ENCODE measurements at regions of chr1 and their contacts with region 1.

Region 1: GRCh38 chr1:162854245-162854882 is 6.6 kb downstream of the CCDC190 start:
- DNase-seq: peak; percentile 13 to 64 (median 25)
- H3K4me3 ChIP-seq: no peak overlapping the region
- H3K4me3 Mint-ChIP-seq: no peak overlapping the region
- H3K27ac ChIP-seq: no peak overlapping the region
- H3K27ac Mint-ChIP-seq: no peak overlapping the region
- H3K4me1 ChIP-seq: no peaks in the 10 kb centered on the region
- H3K4me1 Mint-ChIP-seq: no peaks in the 10 kb centered on the region
- H3K27me3 ChIP-seq: no peaks in the 10 kb centered on the region
- H3K27me3 Mint-ChIP-seq: peaks cover 4 to 11% of the 10 kb centered on the region in 2 donors

Region 2: GRCh38 chr1:163120372-163120771 is 266.0 kb after region 1 on chr1:
- CTCF ChIA-PET with region 1: no interaction called
- POLR2A ChIA-PET with region 1: no interaction called
- DNase-seq: no peak
- H3K4me3 ChIP-seq: no peak overlapping the region
- H3K4me3 Mint-ChIP-seq: no peak overlapping the region
- H3K27ac ChIP-seq: no peak overlapping the region
- H3K27ac Mint-ChIP-seq: no peak overlapping the region
- H3K4me1 ChIP-seq: no peaks in the 10 kb centered on the region
- H3K4me1 Mint-ChIP-seq: no peaks in the 10 kb centered on the region
- H3K27me3 ChIP-seq: no peaks in the 10 kb centered on the region
- H3K27me3 Mint-ChIP-seq: peaks cover 2 to 25% of the 10 kb centered on the region in 2 donors

Region 3: DNA sequence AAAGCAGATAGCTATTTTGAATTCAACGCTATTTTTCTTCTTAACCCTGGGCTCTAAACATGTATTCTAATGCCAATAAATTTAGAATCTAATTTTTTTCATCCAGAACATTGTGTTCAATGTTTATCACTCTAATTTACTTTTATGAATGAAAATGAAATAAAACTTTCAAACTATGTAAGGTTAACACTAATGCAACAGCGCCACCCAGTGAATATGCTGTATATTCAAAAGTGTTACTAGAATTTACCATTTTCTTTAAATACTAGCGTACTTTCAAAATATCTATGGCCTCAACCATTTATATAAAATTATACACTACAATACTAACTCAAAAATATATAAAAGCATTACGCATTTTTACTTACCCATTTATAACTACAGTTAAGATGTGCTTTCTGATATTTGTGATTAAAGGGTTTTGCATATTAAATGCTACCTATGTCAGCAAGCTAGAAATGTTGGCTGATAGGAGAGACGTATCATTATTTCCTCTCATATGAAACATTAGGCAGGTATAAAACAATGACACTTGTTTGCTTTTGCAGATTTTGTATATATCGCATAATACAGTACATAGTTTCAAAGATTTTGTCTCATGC is 461.5 kb after region 1 on chr1:
- CTCF ChIA-PET with region 1: interaction called, 25 read pairs
- POLR2A ChIA-PET with region 1: no interaction called
- DNase-seq: peak; percentile 17 to 52 (median 21)
- H3K4me3 ChIP-seq: no peak overlapping the region
- H3K4me3 Mint-ChIP-seq: no peak overlapping the region
- H3K27ac ChIP-seq: no peak overlapping the region
- H3K27ac Mint-ChIP-seq: no peak overlapping the region
- H3K4me1 ChIP-seq: peaks cover 7% of the 10 kb centered on the region
- H3K4me1 Mint-ChIP-seq: peaks cover 2 to 4% (median 3%) of the 10 kb centered on the region in 3 donors
- H3K27me3 ChIP-seq: no peaks in the 10 kb centered on the region
- H3K27me3 Mint-ChIP-seq: no peaks in the 10 kb centered on the region